A673 (cell line): ENCODE measurements at regions of chr2 and their contacts with region 1.

Region 1: DNA sequence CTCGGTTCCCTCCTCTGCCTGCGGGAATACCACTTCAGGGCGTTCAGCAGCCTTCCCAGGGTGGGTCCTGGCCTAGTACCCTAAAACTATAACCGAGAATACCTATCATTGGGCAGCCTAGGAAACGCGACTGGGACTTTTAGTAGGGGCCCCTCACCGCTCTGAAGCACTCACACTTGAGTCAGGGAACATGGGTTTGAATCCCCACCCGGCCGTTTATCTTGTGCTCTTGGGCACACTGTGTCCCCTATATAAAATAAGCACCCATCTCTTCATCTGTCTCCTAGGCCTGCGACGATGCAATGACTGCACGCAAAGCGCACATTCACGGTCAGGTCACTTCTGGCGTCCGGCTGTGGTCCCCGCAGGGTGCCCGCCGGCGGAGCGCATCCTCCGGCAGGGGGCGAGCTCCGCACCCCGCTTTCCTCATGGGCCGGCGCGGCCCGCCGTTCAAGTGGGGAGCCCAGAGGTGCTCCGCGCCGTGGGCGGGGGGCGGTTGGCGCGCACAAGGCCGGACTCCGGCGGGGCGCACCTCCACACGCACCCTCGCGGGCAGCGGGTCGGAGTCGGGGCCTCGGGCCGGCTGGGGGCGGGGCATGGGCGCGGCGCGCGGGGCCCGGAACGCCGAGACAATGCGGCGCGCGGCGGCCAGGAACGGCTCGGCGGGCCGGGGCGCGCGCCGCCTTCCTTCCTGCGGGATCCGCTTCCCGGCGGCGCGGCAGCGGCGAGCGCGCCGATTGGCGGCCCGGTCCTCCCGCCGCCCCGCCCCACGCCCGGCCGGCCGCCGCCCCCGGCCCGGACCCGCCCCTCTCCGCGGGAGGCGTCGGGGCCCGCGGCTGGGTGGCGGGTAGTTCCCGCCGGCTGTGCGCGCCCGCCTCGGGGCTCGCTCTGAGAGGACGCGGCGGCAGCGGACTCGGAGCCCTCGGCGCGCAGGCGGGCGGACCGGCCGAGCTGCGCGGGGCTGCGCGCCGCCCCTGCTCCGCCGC is at the start of gene ASAP2:
- DNase-seq: peak; percentile 88
- H3K4me3 ChIP-seq: peak within 1 kb of the TSS; percentile 97
- H3K27ac ChIP-seq: peak within 1 kb of the TSS; percentile 86
- H3K4me1 ChIP-seq: peaks cover 24% of the 10 kb centered on the region
- H3K27me3 ChIP-seq: no peaks in the 10 kb centered on the region
- CTCF ChIP-seq: peak; percentile 82
- total RNA-seq, gene ASAP2: 45.1 and 46.8 TPM in 2 replicates

Region 2: DNA sequence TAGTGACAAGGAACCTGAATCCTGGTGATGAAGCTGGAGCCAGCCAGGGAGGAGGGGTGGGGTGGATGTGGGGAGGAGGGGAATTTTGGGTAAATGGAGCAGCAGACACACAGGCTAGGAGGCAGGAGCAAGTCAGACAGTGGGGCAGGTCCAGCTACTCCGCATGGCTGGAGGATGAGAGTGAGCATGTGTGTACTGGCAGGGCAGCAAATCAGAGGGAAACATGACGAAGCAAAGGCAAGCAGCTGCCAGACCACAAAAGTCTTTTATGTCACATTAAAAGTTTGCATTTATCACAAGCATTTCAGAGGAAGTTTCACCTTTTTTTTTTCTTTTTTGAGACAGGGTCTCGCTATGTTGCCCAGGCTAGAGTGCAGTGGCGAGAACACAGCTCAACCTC is 356.9 kb before region 1 on chr2:
- CTCF ChIA-PET with region 1: no interaction called
- POLR2A ChIA-PET with region 1: no interaction called
- intact Hi-C with region 1: no loop called
- DNase-seq: no peak
- H3K4me3 ChIP-seq: no peak overlapping the region
- H3K27ac ChIP-seq: no peak overlapping the region
- H3K4me1 ChIP-seq: no peaks in the 10 kb centered on the region
- H3K27me3 ChIP-seq: no peaks in the 10 kb centered on the region
- CTCF ChIP-seq: no peak

Region 3: DNA sequence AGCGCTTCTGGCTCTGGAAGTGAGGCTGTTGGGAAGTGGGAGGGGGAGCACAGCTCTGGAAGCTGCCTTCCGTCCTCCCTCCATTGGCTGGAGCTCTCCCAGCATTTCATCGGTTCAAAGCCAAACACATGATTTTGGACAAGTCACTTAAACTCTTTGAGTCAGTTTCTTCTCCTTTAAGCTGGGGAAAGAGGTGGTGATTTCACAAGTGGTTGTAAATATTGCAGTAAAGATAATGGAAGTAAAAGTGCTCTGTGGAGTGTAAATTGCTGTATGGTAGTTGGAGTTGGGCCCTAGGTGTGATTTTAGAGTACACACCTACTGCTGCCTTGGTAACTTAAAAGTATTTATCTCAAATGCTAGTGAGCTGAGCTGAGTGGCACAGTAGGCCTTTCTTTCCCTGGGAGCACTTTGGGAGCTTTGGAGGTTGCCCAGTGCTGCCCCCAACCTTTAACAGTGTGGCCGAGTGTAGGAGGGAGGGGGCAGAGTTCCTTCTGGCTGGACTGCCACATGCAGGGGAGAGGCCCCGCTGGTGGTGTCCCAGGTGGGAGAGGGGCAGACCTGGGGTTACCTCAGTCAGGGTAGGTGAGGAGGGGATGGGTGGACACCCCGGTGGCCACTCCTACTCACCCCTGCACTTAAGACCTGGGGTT is 55.1 kb after region 1 on chr2:
- CTCF ChIA-PET with region 1: no interaction called
- POLR2A ChIA-PET with region 1: no interaction called
- intact Hi-C with region 1: loop called (anchors 5 kb)
- DNase-seq: no peak
- H3K4me3 ChIP-seq: no peak overlapping the region
- H3K27ac ChIP-seq: peak overlapping the region; percentile 94
- H3K4me1 ChIP-seq: peaks cover 82% of the 10 kb centered on the region
- H3K27me3 ChIP-seq: no peaks in the 10 kb centered on the region
- CTCF ChIP-seq: no peak

Region 4: GRCh38 chr2:9333591-9334171 is 127.4 kb after region 1 on chr2:
- CTCF ChIA-PET with region 1: no interaction called
- POLR2A ChIA-PET with region 1: no interaction called
- intact Hi-C with region 1: loop called (anchors 1 kb)
- DNase-seq: peak; percentile 89
- H3K4me3 ChIP-seq: no peak overlapping the region
- H3K27ac ChIP-seq: no peak overlapping the region
- H3K4me1 ChIP-seq: peaks cover 19% of the 10 kb centered on the region
- H3K27me3 ChIP-seq: no peaks in the 10 kb centered on the region
- CTCF ChIP-seq: peak; percentile 79